Motor neuron (in vitro differentiated cells): ENCODE measurements at regions of chr4 and their contacts with region 1.

Region 1: DNA sequence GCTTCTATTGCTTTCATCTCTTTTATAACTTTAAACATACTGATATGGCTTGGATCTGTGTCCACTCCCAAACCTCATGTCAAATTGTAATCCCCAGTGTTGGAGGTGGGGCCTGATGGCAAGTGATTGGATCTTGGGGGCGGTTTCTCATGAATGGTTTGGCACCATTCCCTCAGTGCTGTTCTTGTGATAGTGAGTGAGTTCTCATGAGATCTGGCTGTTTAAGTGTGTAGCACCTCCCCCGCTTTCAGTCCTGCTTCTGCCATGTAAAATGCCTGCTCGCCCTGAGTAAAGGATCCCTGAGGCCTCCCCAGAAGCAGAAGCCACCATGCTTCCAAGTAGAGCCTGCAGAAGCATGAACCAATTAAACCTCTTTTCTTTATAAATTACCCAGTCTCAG is 17.7 kb downstream of the MND1 start:
- ATAC-seq: peak in 2 of 8 experiments; percentile 36 to 52
- H3K4me3 ChIP-seq: no peak overlapping the region
- H3K27ac ChIP-seq: no peak overlapping the region
- H3K4me1 ChIP-seq: no peaks in the 10 kb centered on the region

Region 2: GRCh38 chr4:153594210-153594609 is 232.0 kb after region 1 on chr4:
- in situ Hi-C with region 1: loop called in 1 of 9 experiments (anchors 25 kb)
- ATAC-seq: peak in 1 of 8 experiments; percentile 38
- H3K4me3 ChIP-seq: no peak overlapping the region
- H3K27ac ChIP-seq: no peak overlapping the region
- H3K4me1 ChIP-seq: no peaks in the 10 kb centered on the region